Dendritic cell treated with granulocyte-macrophage colony-stimulating factor and Interleukin-4, amounts not matched to agents 40 ng/mL and 50 ng/mL, for 4 days (primary cell): ENCODE measurements at regions of chr6 and their contacts with region 1.

Region 1: GRCh38 chr6:13702809-13703302 is 8.8 kb downstream of the RANBP9 start:
- H3K4me3 Mint-ChIP-seq: no peak overlapping the region
- H3K27ac Mint-ChIP-seq: no peak overlapping the region
- H3K4me1 Mint-ChIP-seq: peaks cover 31% of the 10 kb centered on the region
- H3K27me3 Mint-ChIP-seq: no peaks in the 10 kb centered on the region

Region 2: DNA sequence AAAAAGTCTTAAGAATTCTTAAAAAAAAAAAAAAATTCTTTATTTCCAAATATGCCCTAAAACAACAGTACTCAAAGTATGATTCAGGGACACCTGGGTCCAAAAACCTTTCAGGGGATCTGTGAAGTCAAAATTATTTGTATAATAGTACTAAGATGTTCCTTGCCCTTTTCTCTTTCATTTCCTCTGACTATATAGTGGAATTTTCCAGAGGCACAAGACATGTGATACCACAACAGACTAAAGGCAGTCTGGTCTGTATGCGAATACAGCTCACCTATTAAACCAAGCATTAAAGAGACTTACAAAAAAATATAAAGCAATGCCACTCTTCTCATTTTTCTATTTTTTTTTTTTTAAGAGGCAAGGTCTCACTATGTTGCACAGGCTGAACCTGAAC is 72.4 kb before region 1 on chr6:
- intact Hi-C with region 1: loop called (anchors 5 kb)
- H3K4me3 Mint-ChIP-seq: no peak overlapping the region
- H3K27ac Mint-ChIP-seq: no peak overlapping the region
- H3K4me1 Mint-ChIP-seq: peaks cover 13% of the 10 kb centered on the region
- H3K27me3 Mint-ChIP-seq: no peaks in the 10 kb centered on the region

Region 3: DNA sequence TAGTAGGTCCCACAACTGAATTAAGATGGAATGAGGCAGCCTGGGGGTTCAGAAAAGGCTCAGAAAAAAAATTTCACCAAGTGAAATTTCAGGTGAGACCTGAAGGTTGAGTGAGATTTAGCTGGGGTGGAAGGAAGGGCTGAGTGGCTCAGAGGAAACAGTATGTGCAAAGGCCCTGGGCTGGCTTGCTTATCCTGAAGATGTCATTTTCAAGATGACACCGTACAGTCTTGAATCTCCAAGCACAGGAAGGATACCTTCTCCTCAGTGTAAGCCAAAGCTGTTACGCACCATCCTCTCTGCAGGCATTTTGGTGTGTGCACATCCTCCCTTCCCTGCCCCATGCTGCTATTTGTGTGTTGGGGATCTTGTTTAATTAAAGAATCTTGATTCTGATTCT is 51.8 kb after region 1 on chr6:
- intact Hi-C with region 1: no loop called
- H3K4me3 Mint-ChIP-seq: no peak overlapping the region
- H3K27ac Mint-ChIP-seq: no peak overlapping the region
- H3K4me1 Mint-ChIP-seq: peaks cover 10% of the 10 kb centered on the region
- H3K27me3 Mint-ChIP-seq: no peaks in the 10 kb centered on the region